ENCODE measurements at regions of chr14 and their contacts with region 1.

Region 1: DNA sequence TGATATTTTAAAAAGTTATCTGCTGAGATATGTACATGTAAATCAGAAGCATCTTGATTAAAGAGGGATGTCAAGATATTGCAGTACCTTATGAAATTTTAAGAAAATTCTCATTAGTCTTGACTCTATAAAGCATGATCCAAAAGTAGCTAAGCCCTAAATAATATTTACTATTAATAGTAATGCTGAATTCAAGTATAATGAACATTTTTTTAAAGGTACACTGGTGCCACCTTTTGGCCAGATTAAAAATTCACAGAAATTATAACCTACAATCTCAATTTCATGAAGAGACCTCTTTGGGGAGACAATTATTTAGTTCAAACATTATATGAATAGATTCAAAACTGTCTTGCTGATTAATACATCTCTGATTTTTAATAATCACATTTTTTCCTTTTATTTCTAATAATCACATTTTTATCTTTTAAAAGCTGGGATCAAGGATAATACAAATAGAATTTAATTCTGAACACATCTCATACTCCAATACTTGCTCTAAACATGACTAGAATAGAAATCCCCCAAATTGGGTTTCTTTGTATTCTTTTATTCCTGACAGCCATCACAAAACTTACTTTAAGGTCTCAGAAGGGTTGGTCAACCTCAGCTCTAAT is 13.4 kb downstream of the AKAP5 start:
- DNase-seq: peak; percentile 64
- ATAC-seq: peak; percentile 60
- H3K4me3 ChIP-seq: no peak overlapping the region
- H3K27ac ChIP-seq: no peak overlapping the region
- H3K4me1 ChIP-seq: no peaks in the 10 kb centered on the region
- H3K27me3 ChIP-seq: no peaks in the 10 kb centered on the region
- CTCF ChIP-seq: peak; percentile 73

Region 2: DNA sequence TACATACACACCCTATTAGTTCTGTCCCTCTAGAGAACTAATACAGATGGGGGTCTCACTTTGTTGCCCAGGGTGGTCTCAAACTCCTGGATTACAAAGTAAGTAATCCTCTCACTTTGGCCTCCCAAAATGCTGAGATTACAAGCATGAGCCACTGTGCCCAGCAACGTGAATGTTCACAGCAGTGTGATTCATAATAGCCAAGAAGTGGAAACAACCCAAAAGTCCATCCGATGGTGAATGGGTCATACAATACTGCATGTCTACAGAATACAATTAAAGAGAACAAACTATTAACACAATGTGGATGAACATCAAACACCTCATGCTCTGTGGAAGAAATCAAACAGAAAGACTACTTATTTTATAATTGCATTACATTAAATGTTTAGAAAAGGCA is 683.2 kb before region 1 on chr14:
- CTCF ChIA-PET with region 1: no interaction called
- POLR2A ChIA-PET with region 1: no interaction called
- intact Hi-C with region 1: loop called (anchors 10 kb)
- DNase-seq: no peak
- ATAC-seq: no peak
- H3K4me3 ChIP-seq: no peak overlapping the region
- H3K27ac ChIP-seq: no peak overlapping the region
- H3K4me1 ChIP-seq: no peaks in the 10 kb centered on the region
- H3K27me3 ChIP-seq: no peaks in the 10 kb centered on the region
- CTCF ChIP-seq: no peak

Region 3: DNA sequence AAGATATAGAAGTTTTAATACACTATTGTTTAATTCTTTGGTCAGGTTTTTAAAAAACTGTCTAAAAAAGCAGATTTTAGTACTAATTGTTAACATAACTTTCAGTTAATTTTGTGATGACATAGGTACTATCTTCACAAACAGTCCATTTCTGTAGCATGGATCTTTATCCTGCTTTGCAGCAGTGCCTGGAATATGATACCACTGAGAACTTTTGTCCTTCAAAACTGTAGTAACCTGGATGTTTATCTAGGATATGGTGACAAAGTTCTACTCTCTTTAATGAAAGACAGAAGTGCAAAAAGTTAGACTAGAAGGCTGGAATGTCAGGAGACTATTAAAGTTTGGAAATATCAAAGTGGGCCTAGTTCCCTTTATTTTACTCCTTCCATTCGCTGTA is 466.0 kb before region 1 on chr14:
- CTCF ChIA-PET with region 1: interaction called, 4 read pairs
- POLR2A ChIA-PET with region 1: no interaction called
- intact Hi-C with region 1: loop called (anchors 10 kb)
- DNase-seq: no peak
- ATAC-seq: no peak
- H3K4me3 ChIP-seq: no peak overlapping the region
- H3K27ac ChIP-seq: no peak overlapping the region
- H3K4me1 ChIP-seq: no peaks in the 10 kb centered on the region
- H3K27me3 ChIP-seq: no peaks in the 10 kb centered on the region
- CTCF ChIP-seq: no peak